CD4-positive, alpha-beta memory T cell (primary cell): ENCODE measurements at regions of chr5 and their contacts with region 1.

Region 1: DNA sequence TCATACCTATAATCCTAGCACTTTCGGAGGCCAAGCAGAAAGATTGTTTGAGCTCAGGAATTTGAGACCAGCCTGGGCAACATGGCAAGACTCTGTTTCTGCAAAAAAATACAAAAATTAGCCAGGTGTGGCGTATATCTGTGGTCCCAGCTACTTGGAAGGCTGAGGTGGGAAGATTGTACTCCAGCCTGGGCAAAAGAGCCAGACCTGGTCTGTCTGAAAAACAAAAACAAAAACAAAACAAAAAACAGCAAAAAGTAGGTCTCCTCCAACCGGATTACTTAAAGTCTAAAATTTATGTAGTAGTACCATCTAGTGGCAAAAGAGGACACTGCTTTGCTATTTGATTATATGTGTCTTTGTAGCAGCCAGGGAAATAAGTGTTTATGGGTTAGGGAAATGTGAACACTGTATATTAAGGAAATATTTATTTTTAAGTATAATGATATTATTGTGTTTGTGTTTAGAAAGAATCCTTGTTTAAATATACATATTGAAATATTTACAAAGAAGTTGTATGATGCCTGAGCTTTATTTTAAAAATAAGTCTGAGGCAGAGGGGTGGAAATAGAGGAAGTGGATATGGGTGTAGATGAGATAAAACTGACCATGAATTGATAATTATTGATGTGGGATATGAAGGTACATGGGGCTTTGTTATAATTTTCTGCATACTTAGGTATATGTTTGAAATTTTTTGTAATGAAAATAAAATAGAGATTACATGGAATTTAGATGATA is 20.0 kb downstream of the APC start:
- DNase-seq: peak in 4 of 5 donors; percentile 50 to 64 (median 52)
- H3K4me3 ChIP-seq: no peak overlapping the region
- H3K4me3 Mint-ChIP-seq: peak overlapping the region in 1 of 8 donors; percentile 20
- H3K27ac ChIP-seq: no peak overlapping the region
- H3K27ac Mint-ChIP-seq: peak overlapping the region in 5 of 7 donors; percentile 3 to 71 (median 59)
- H3K4me1 ChIP-seq: no peaks in the 10 kb centered on the region
- H3K4me1 Mint-ChIP-seq: peaks cover 9 to 12% (median 9%) of the 10 kb centered on the region in 4 donors
- H3K27me3 ChIP-seq: no peaks in the 10 kb centered on the region
- H3K27me3 Mint-ChIP-seq: no peaks in the 10 kb centered on the region

Region 2: DNA sequence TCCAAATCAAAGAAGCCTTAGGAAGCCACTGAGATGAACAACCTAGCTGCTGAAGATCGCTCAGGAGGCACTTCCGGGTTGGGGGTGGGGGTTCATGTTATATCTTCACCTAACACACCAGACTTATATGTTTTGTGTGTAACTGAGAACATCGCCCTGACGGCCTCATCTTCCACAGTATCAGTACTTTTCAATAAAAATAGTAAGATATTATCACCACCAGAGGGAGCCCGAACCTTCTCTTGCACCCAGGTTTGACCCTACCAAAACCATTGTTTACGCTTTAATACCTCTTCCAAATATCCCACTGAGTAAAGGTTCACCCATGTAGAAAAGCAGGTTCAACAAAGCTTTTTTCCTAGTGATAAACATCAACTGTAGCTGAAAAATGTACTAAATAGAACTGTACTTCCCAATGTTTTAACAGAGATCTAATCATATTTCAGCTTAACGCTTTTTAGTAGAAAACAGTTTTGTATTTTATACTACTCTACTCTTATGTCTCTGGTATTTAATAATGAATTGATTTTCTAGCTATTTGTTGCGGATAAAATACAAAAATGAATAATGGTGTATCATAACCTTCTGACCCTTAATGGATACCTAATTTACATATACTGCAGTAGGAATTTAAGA is 582.6 kb before region 1 on chr5:
- CTCF ChIA-PET with region 1: interaction called, 36 read pairs
- POLR2A ChIA-PET with region 1: no interaction called
- intact Hi-C with region 1: loop called (anchors 1 kb)
- DNase-seq: peak in 4 of 5 donors; percentile 27 to 41 (median 40)
- H3K4me3 ChIP-seq: no peak overlapping the region
- H3K4me3 Mint-ChIP-seq: peak overlapping the region in 2 of 8 donors; percentile 6 to 48
- H3K27ac ChIP-seq: no peak overlapping the region
- H3K27ac Mint-ChIP-seq: no peak overlapping the region
- H3K4me1 ChIP-seq: peaks cover 4% of the 10 kb centered on the region
- H3K4me1 Mint-ChIP-seq: peaks cover 0 to 5% (median 2%) of the 10 kb centered on the region in 4 donors
- H3K27me3 ChIP-seq: no peaks in the 10 kb centered on the region
- H3K27me3 Mint-ChIP-seq: peaks cover 8 to 12% of the 10 kb centered on the region in 2 donors

Region 3: GRCh38 chr5:112691758-112692157 is 65.9 kb before region 1 on chr5:
- CTCF ChIA-PET with region 1: interaction called, 40 read pairs
- POLR2A ChIA-PET with region 1: no interaction called
- intact Hi-C with region 1: loop called (anchors 2 kb)
- DNase-seq: peak in 2 of 5 donors; percentile 9
- H3K4me3 ChIP-seq: no peak overlapping the region
- H3K4me3 Mint-ChIP-seq: no peak overlapping the region
- H3K27ac ChIP-seq: no peak overlapping the region
- H3K27ac Mint-ChIP-seq: no peak overlapping the region
- H3K4me1 ChIP-seq: no peaks in the 10 kb centered on the region
- H3K4me1 Mint-ChIP-seq: no peaks in the 10 kb centered on the region
- H3K27me3 ChIP-seq: peaks cover 12% of the 10 kb centered on the region
- H3K27me3 Mint-ChIP-seq: peaks cover 19 to 42% of the 10 kb centered on the region in 2 donors

Region 4: DNA sequence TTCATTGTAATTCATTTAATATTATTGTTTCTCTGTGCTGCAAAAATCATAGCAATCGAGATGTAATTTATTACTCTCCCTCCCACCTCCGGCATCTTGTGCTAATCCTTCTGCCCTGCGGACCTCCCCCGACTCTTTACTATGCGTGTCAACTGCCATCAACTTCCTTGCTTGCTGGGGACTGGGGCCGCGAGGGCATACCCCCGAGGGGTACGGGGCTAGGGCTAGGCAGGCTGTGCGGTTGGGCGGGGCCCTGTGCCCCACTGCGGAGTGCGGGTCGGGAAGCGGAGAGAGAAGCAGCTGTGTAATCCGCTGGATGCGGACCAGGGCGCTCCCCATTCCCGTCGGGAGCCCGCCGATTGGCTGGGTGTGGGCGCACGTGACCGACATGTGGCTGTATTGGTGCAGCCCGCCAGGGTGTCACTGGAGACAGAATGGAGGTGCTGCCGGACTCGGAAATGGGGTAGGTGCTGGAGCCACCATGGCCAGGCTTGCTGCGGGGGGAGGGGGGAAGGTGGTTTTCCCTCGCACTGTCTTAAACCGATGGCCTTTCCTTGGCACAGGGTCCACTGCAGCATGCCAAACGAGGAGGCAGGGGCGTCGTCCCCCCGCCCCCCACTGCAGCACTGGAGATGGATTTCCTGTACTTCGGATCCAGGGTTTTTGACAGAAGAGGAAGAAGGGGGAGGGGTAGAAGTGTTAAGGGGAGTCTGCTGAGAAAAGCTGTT is 20.0 kb before region 1 on chr5 and contains the start of gene APC:
- CTCF ChIA-PET with region 1: interaction called, 14 read pairs
- POLR2A ChIA-PET with region 1: no interaction called
- intact Hi-C with region 1: no loop called
- DNase-seq: peak; percentile 72 to 89 (median 78)
- H3K4me3 ChIP-seq: peak within 1 kb of the TSS; percentile 47 to 65
- H3K4me3 Mint-ChIP-seq: peak within 1 kb of the TSS; percentile 92 to 99 (median 96)
- H3K27ac ChIP-seq: peak within 1 kb of the TSS; percentile 17
- H3K27ac Mint-ChIP-seq: peak within 1 kb of the TSS; percentile 70 to 96 (median 93)
- H3K4me1 ChIP-seq: peaks cover 12% of the 10 kb centered on the region
- H3K4me1 Mint-ChIP-seq: peaks cover 18 to 28% (median 22%) of the 10 kb centered on the region in 4 donors
- H3K27me3 ChIP-seq: no peaks in the 10 kb centered on the region
- H3K27me3 Mint-ChIP-seq: no peaks in the 10 kb centered on the region
- total RNA-seq, gene APC: 40.5 to 44.5 TPM

Region 5: DNA sequence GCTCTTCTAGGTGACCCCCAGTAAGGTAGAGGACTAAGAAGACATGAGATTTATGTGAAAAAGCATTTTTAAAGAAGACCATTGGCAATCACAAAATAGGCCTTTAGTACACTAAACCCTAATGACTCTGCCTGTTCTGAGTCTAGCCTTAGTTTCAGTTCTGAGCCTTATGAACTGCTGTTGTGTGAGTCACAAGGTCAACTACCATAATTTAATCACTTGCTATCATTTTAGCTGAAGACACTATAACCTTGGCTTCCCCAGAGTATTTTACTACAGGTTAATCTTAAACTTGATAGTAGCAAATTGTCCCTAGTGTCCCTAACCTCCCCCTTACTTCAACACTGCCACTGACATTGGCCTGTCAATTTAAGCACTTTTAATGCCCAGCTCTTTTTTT is 14.5 kb after region 1 on chr5:
- CTCF ChIA-PET with region 1: interaction called, 11 read pairs
- POLR2A ChIA-PET with region 1: no interaction called
- intact Hi-C with region 1: no loop called
- DNase-seq: no peak
- H3K4me3 ChIP-seq: no peak overlapping the region
- H3K4me3 Mint-ChIP-seq: no peak overlapping the region
- H3K27ac ChIP-seq: no peak overlapping the region
- H3K27ac Mint-ChIP-seq: no peak overlapping the region
- H3K4me1 ChIP-seq: no peaks in the 10 kb centered on the region
- H3K4me1 Mint-ChIP-seq: no peaks in the 10 kb centered on the region
- H3K27me3 ChIP-seq: no peaks in the 10 kb centered on the region
- H3K27me3 Mint-ChIP-seq: no peaks in the 10 kb centered on the region